ENCODE measurements at regions of chr7 and their contacts with region 1.

Region 1: GRCh38 chr7:2109936-2110585 is 122.7 kb downstream of the MAD1L1 start:
- DNase-seq: no peak
- ATAC-seq: peak in 2 of 8 donors; percentile 10 to 38
- H3K4me3 ChIP-seq: no peak overlapping the region
- H3K27ac ChIP-seq: peak overlapping the region in 1 of 10 donors; percentile 57
- H3K4me1 ChIP-seq: peaks cover 3 to 51% (median 24%) of the 10 kb centered on the region in 9 donors
- H3K27me3 ChIP-seq: no peaks in the 10 kb centered on the region
- CTCF ChIP-seq: no peak

Region 2: GRCh38 chr7:2195400-2196246 is 85.6 kb after region 1 on chr7:
- intact Hi-C with region 1: loop called in 5 of 10 experiments (anchors 5 to 10 kb)
- DNase-seq: peak; percentile 50
- ATAC-seq: peak; percentile 41 to 77 (median 62)
- H3K4me3 ChIP-seq: no peak overlapping the region
- H3K27ac ChIP-seq: peak overlapping the region in 7 of 10 donors; percentile 13 to 69 (median 55)
- H3K4me1 ChIP-seq: peaks cover 6 to 29% (median 22%) of the 10 kb centered on the region in 9 donors
- H3K27me3 ChIP-seq: no peaks in the 10 kb centered on the region
- CTCF ChIP-seq: no peak

Measured in heart right ventricle (tissue), 16 donors.